ENCODE measurements at regions of chr3 and their contacts with region 1.

Region 1: DNA sequence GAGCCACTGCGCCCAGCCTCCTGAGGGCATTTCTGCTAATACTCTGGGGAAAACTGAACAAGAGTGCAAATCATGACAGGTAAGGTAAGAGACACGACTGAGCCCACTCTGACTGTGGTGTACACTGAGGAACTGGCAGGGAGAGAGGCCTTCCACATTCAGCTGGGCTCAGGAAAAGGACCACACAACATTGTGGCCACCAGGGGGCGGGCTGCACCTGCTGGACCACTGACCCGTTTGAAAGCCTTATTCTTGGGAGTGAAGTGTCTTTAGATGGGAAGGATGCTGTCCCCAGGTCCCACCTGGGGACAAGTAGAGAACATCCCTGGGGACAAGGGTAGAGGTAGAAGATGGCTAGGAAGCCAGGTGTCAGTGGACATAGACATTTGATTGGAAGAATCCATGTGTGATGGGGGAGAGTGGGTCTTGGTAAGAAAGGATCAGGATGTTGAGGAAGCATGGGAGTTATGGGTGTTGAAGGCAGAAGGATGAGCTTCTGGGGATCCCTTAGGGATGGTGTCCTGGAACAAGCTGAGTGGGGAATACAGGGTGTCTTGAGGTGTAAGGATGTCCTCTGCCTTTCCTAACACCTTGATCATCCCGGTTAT is 6.2 kb upstream of the CTDSPL start:
- DNase-seq: peak; percentile 94
- ATAC-seq: peak; percentile 54

Region 2: DNA sequence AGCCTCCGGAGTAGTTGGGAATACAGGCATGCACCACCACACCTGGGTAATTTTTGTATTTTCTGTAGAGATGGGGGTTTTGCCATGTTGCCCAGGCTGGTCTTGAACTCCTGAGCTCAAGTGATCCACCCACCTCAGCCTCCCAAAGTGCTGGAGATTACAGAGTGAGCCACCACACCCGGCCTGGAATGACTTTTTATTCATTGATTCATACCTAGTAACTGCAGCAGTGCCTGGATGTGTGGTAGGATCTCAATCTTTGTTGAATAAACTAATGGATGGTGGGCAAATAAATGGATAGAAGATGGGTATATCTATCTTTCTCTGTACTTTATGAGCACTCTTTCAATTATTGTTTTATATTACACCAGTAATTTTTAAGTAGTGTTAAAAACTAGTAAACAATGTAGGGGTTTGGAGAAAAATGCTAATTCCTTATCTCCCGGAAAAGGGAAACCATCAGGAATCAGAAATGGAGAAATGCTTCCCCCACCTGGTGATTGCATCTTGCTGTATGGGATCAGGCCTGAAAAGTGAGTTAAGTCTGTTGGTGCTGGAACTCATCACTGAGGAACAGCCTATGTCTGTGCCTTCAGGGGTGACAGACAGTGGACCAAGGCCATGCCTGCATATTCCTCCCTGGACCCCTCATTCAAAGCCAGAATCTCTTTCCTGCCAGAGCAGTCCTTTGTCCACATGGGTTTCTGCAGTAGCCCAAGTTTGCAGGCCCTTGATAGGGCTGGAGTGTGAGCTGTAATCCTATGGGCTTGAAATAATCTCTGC is 154.8 kb before region 1 on chr3:
- intact Hi-C with region 1: no loop called
- DNase-seq: no peak
- ATAC-seq: no peak

Region 3: DNA sequence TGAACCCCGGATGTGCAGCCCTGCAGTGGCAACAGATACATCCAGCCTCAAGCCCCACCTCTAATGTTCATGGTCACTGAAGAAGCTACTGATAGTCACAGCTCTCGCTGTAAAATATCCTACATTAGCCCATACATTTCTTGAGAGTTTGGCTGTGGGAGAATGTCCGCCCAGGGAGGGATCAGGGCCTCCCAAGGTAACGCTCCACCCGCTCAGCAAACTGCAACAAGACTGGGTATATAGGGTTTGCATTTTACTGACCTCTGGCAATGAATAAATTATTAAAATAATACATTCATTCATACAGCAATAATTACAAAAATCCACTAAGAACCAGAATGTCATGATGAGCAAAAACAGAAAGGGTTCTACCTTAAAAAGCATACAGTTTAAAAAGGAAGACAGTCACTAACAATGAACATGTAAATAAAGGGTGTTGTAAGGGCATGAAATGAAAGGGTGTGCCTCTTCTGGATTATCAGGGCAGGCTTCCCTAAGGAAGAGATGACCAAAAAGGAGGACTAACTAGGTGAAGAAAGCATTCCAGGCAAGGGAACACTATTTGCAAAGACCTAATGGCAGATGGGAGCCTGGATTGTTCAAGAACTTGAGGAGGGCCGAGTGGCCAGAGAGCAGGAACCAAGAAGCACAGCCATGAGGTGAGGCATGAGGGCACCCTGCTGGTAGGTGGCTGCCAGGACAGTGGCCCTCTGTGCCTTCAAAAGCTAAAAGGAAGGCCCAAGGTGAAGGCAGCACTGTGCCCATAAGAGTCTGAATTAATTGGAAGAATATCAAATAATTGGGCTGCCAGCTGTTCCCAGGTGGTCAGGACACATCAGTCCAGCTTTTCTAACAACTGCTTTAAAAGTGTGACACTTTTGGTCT is 21.9 kb before region 1 on chr3:
- intact Hi-C with region 1: loop called (anchors 1 kb)
- DNase-seq: no peak
- ATAC-seq: peak; percentile 72

Region 4: GRCh38 chr3:37967260-37967881 is 111.9 kb after region 1 on chr3:
- intact Hi-C with region 1: loop called (anchors 1 kb)
- DNase-seq: no peak
- ATAC-seq: peak; percentile 73

Region 5: GRCh38 chr3:38127611-38128302 is 272.3 kb after region 1 on chr3:
- intact Hi-C with region 1: no loop called
- DNase-seq: peak; percentile 26
- ATAC-seq: peak; percentile 53